Activated CD4-positive, alpha-beta T cell treated with anti-CD3 and anti-CD28 coated beads, Interleukin-2, amount 10 ng/mL, durations not matched to agents 7 days and 5 days (primary cell): ENCODE measurements at regions of chr5 and their contacts with region 1.

Region 1: GRCh38 chr5:39376293-39376714 is 12.0 kb upstream of the C9 start:
- DNase-seq: peak; percentile 53
- H3K4me3 Mint-ChIP-seq: no peak overlapping the region
- H3K27ac Mint-ChIP-seq: no peak overlapping the region
- H3K4me1 Mint-ChIP-seq: no peaks in the 10 kb centered on the region
- H3K27me3 Mint-ChIP-seq: peaks cover 2% of the 10 kb centered on the region

Region 2: DNA sequence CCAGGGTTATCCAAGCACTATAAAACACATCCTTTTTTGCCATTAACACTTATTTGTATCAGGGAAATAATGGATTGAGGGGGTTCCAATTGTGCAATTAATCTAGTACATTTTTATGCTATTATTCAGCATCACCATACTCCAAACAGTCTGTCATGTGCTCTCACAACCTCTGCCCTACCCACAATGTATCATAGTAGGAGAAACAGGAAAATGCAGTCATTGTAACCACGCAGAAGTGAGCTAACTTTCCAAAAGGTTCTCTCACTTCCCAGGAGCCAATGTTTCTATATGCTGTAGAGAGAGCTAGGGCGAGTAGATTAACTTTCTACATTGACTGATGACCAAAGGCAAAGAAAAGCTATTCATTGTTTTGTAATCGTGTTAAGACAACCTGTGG is 18.6 kb after region 1 on chr5:
- CTCF ChIA-PET with region 1: interaction called, 13 read pairs
- POLR2A ChIA-PET with region 1: no interaction called
- DNase-seq: no peak
- H3K4me3 Mint-ChIP-seq: no peak overlapping the region
- H3K27ac Mint-ChIP-seq: no peak overlapping the region
- H3K4me1 Mint-ChIP-seq: peaks cover 3% of the 10 kb centered on the region
- H3K27me3 Mint-ChIP-seq: no peaks in the 10 kb centered on the region